Motor neuron (in vitro differentiated cells): ENCODE measurements at regions of chr18 and their contacts with region 1.

Region 1: DNA sequence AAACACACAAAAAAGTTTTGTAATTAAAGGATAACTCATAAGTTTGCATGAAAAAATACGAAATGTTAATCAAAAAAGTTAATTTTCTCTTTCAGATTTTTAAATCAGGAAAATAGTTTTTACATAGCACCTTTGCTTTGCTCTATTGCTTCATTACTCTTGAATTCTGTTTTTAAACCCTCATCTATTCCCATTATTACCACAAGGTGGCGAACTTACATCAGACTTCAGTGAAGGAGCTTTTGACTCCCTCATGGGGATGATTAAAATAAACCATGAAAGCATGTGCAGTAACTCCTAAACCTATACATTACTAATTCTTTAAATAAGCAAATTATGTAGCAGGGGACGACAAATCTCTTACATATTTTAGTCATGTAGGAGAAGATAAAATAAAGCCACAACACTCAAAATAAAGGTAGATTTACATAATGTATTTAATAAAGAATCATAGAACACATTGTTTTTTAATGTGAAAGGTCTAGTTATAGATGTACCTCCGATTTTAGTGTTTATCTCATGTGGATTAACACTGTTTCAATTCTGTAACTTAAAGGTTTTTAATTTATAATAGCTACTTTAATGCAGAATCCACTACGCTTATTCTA is 105.2 kb downstream of the NETO1 start:
- ATAC-seq: peak in 6 of 8 experiments; percentile 35 to 68 (median 48)
- H3K4me3 ChIP-seq: no peak overlapping the region
- H3K27ac ChIP-seq: no peak overlapping the region
- H3K4me1 ChIP-seq: no peaks in the 10 kb centered on the region

Region 2: DNA sequence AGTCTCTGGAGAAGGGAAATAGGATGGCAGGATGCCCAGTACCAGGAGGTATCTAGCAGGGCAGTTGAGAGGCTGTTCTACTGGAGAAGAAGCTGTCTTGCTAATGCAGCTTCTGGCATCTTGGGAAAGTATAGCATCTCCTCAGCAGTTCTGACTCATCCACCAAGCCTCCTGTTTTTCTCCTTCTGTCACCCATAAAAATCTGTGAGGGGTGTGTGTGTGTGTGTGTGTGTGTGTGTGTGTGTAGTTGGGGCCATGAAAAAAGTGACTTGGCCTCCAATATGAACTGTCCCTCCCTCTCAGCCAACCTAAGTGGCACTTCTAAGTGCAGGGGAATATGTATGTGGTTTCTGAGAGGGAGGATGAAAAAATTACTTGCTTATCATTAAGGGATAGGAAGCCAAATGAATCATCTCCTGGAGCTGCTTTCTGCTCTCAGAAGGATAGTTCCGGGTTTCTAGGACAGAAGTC is 302.4 kb before region 1 on chr18:
- in situ Hi-C with region 1: no loop called
- ATAC-seq: no peak
- H3K4me3 ChIP-seq: no peak overlapping the region
- H3K27ac ChIP-seq: no peak overlapping the region
- H3K4me1 ChIP-seq: no peaks in the 10 kb centered on the region

Region 3: DNA sequence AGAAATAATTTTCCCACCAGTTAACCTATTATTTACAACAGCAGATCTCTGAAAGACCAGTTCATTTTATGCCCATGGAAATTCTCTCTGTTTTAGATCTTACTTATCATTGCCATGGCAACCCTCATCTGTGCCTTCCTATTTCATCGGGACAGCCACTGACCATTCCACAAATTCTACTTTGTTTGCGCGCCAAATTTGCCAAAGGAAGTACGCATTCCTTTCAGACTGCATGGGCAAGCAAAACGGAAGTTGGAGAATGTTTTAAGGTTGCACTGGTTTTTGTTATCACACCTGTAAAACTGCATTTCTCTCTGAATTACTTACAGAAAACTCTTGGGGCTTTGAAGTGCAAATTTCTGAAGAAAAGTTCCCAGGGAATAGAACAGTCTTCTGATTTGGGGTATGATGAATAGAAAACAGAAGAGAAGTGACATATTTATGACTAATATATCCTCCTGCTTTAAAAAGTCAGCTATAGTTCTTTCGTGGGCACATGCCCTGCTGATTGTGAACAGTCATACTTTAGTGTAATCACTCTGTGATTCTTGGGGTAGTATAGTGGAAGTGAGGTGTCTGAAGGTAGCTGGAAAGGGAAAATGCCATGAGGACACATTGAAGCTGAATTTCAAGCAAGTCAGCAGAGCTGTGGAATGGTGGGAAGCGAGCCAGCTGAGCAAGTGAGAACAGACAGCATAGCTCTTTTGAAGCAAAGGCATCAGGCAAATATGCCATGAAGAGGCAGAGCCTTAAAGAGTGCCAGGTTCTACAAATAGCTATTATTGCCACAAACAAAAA is 84.3 kb after region 1 on chr18:
- in situ Hi-C with region 1: no loop called
- ATAC-seq: peak in 1 of 8 experiments; percentile 14
- H3K4me3 ChIP-seq: no peak overlapping the region
- H3K27ac ChIP-seq: no peak overlapping the region
- H3K4me1 ChIP-seq: peaks cover 3 to 5% of the 10 kb centered on the region in 2 donors

Region 4: DNA sequence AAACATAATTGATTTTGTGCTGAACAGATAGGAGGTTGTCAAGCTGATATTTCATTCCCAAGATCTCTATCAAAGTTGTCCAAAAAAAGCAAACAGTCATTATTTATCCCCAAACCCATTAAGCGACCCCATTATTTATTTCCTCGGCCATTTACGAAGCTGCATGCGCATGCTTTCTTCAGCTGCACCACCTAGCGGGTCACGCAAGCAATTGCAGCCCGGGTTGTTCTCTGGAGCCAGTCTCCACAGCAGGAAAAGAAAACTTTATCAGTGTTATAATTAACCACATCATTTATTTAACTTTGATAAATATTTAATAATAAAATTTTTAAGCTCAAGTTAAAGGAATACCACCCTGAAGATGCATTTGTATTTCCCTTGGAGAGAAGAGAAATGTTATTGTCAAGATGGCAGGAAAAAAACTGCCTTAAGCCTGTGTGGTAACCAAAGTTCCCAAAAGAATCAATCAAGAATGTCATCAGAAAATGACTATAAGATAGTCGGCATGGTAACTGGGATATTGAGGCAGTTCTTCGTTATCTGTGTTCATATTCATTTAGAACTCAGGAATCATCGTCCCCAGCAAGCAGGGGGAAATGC is 1080.3 kb after region 1 on chr18:
- in situ Hi-C with region 1: loop called in 1 of 9 experiments (anchors 25 kb)
- ATAC-seq: peak in 6 of 8 experiments; percentile 43 to 71 (median 56)
- H3K4me3 ChIP-seq: no peak overlapping the region
- H3K27ac ChIP-seq: no peak overlapping the region
- H3K4me1 ChIP-seq: peaks cover 11 to 20% of the 10 kb centered on the region in 2 donors

Region 5: GRCh38 chr18:74116633-74117554 is 1354.3 kb after region 1 on chr18:
- in situ Hi-C with region 1: loop called in 4 of 9 experiments (anchors 10 to 25 kb)
- ATAC-seq: peak; percentile 28 to 75 (median 58)
- H3K4me3 ChIP-seq: no peak overlapping the region
- H3K27ac ChIP-seq: no peak overlapping the region
- H3K4me1 ChIP-seq: peaks cover 5 to 6% of the 10 kb centered on the region in 2 donors

Region 6: GRCh38 chr18:74147779-74148542 is 1385.3 kb after region 1 on chr18 and contains the starts of genes FBXO15 and TIMM21:
- in situ Hi-C with region 1: loop called in 1 of 9 experiments (anchors 25 kb)
- ATAC-seq: peak; percentile 87 to 92 (median 90)
- H3K4me3 ChIP-seq: peak within 1 kb of the TSS; percentile 56 to 88 (median 78)
- H3K27ac ChIP-seq: peak within 1 kb of the TSS; percentile 80 to 95
- H3K4me1 ChIP-seq: peaks cover 16% of the 10 kb centered on the region in 2 donors
- total RNA-seq, gene FBXO15: 0.36 to 6.0 (median 3.3) TPM
- total RNA-seq, gene TIMM21: 20.2 to 46.1 (median 30.2) TPM